Mammary epithelial cell (primary cell): ENCODE measurements at regions of chr20 and their contacts with region 1.

Region 1: GRCh38 chr20:1802385-1803060 is 92.7 kb upstream of the SIRPA start:
- DNase-seq: peak; percentile 52
- H3K4me3 ChIP-seq: peak overlapping the region; percentile 12 to 37 (median 26)
- H3K27ac ChIP-seq: no peak overlapping the region
- H3K4me1 ChIP-seq: peaks cover 38% of the 10 kb centered on the region
- H3K27me3 ChIP-seq: no peaks in the 10 kb centered on the region
- CTCF ChIP-seq: peak; percentile 50 to 75

Region 2: DNA sequence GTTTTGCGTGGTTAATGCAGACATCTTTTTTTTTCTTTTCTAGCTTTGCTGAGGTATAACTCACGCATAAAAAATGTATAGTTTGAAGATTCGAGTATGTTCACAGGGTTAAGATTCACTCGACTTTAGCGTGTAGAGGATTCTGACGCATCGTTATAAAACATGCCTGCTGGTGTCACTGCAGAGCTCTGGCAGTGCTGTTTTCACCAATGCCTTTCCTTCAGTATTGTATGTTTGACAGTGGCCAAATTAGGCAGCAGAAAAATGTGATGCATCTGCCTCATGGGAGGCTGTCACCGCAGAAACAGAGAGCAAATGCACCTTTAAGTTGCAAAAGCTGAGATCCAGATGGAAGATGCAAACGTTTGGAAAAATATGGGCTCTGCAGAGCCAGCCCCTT is 293.3 kb before region 1 on chr20:
- CTCF ChIA-PET with region 1: no interaction called
- dilution Hi-C with region 1: no loop called
- in situ Hi-C with region 1: no loop called
- intact Hi-C with region 1: loop called (anchors 1 kb)
- DNase-seq: peak; percentile 54
- H3K4me3 ChIP-seq: no peak overlapping the region
- H3K27ac ChIP-seq: no peak overlapping the region
- H3K4me1 ChIP-seq: peaks cover 38% of the 10 kb centered on the region
- H3K27me3 ChIP-seq: no peaks in the 10 kb centered on the region
- CTCF ChIP-seq: peak; percentile 51 to 69

Region 3: DNA sequence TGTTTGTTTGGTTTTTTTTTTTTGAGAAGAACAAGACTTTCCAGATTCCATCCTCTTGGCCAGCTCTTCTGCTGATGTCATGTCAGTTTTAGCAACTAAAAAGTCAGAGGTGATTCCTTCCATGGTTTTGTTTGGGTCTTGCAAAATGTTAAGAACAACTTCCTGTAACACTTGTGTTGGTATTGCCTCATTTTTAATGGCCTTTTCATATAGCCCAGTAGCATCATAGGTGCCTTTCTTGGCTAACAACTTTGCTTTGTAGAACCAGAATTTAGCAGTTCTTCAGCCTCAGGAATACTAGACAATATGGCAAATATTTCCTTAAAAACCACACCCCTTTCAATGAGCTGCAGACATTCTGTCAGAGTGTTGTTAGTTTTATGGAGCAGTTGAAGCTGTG is 45.5 kb before region 1 on chr20:
- CTCF ChIA-PET with region 1: no interaction called
- dilution Hi-C with region 1: no loop called
- in situ Hi-C with region 1: no loop called
- intact Hi-C with region 1: no loop called
- DNase-seq: no peak
- H3K4me3 ChIP-seq: no peak overlapping the region
- H3K27ac ChIP-seq: no peak overlapping the region
- H3K4me1 ChIP-seq: peaks cover 12% of the 10 kb centered on the region
- H3K27me3 ChIP-seq: no peaks in the 10 kb centered on the region
- CTCF ChIP-seq: no peak

Region 4: DNA sequence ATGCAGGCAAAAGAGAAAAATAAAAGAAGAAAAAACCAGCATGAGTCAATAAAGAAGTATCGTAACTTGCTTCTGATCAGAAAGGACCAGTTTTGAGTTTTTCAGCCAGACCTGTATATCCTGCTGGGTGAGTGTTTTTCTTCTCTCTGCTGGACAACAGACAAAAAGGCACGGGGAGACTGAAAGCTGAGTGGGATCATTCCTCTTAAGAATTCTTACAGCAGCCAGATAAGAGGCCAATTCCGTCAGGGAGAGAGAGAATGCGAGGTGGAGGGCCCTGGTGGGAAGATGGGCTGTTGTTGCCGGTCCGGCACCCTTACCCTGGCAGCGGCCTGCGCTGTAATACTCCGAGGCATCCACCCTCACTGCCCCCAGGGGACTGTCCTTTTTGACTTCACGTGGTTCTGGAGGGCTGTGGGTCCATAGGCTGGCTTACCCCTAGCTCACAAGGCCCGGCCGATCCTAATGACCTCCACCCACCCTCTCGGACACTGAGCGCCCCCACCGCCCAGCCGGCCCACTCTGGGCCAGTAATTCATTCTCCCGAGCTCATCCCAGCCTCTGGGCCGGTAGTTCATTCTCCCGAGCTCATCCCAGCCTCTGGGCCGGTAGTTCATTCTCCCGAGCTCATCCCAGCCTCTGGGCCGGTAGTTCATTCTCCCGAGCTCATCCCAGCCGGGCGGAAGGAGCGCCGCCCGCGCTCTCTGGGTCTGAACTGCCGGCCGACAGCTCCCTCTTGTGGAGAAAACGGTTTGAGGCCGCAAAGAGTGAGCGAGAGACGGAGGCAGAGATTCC is 25.6 kb before region 1 on chr20:
- CTCF ChIA-PET with region 1: interaction called, 4 read pairs
- dilution Hi-C with region 1: no loop called
- in situ Hi-C with region 1: no loop called
- intact Hi-C with region 1: loop called (anchors 2 kb)
- DNase-seq: peak; percentile 80
- H3K4me3 ChIP-seq: peak overlapping the region; percentile 48 to 63 (median 57)
- H3K27ac ChIP-seq: peak overlapping the region; percentile 37
- H3K4me1 ChIP-seq: peaks cover 14% of the 10 kb centered on the region
- H3K27me3 ChIP-seq: no peaks in the 10 kb centered on the region
- CTCF ChIP-seq: peak; percentile 62 to 87

Region 5: GRCh38 chr20:1860446-1860845 is 57.9 kb after region 1 on chr20:
- CTCF ChIA-PET with region 1: no interaction called
- dilution Hi-C with region 1: no loop called
- in situ Hi-C with region 1: no loop called
- intact Hi-C with region 1: no loop called
- DNase-seq: peak; percentile 82
- H3K4me3 ChIP-seq: no peak overlapping the region
- H3K27ac ChIP-seq: peak overlapping the region; percentile 37
- H3K4me1 ChIP-seq: peaks cover 25% of the 10 kb centered on the region
- H3K27me3 ChIP-seq: no peaks in the 10 kb centered on the region
- CTCF ChIP-seq: no peak

Region 6: DNA sequence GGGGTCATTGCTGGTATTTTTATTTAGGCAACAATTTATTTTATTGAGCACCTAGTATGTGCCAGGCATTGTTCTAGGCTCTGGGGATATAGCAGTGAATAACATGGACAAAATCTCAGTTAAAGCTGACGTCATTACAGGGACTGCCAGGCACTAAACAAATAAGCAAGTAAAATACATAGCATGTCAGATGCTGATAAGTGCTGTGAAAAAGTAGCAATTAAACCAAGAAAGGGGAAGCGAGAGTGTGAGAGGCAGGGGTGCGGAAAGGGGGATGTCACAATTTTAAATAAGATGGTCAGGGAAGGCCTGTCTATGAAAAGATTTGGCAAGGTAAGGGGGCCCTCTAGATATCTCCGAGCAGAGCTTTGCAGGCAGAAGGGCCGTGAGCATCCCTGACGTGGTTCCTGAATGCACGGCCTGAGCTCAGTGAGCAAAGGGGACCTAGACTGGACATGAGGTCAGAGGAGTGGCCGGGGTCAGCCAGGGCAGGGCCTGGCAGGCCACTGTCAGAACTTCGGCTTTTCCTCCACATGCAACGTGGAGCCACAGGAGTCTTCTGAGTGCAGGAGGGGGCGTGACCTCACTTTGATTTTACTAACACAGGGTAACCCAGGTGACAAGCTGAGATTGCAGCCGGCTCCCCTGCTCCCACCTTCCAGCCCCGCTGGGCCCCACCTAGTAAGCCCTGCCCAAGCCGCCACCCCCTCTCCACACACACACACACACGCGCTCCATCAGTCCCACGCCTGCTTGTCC is 68.4 kb after region 1 on chr20:
- CTCF ChIA-PET with region 1: no interaction called
- dilution Hi-C with region 1: no loop called
- in situ Hi-C with region 1: no loop called
- intact Hi-C with region 1: no loop called
- DNase-seq: no peak
- H3K4me3 ChIP-seq: no peak overlapping the region
- H3K27ac ChIP-seq: no peak overlapping the region
- H3K4me1 ChIP-seq: peaks cover under 1% of the 10 kb centered on the region
- H3K27me3 ChIP-seq: no peaks in the 10 kb centered on the region
- CTCF ChIP-seq: no peak

Region 7: DNA sequence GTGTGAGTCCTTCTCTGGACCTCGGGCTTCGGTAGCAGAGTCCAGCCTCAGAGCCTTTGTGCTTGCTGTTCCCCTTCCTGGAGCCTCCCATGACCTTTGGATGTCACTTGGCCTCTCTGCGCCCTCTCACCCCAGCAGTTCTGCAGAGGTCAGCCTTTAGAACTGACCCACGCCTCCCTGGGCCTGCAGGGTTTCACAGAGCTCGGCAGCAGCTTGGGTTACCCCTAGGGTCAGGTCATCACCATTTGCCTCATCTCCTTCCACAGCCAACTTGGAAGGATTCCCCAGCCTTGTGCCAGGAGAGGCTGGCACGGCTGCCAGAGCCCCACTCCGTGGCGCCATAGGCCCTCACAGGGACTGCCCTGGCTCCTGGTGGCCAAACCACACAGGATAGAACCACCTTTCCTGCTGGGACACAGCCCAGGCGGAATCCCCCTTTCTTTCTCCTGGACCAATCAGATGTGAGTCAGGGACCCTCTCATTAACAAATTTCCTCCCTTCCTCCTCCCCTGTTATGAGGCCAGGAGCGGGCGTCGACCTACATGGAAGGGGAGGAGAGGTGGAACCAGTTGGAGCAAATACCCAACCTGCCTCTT is 78.8 kb after region 1 on chr20:
- CTCF ChIA-PET with region 1: no interaction called
- dilution Hi-C with region 1: no loop called
- in situ Hi-C with region 1: no loop called
- intact Hi-C with region 1: loop called (anchors 5 kb)
- DNase-seq: no peak
- H3K4me3 ChIP-seq: no peak overlapping the region
- H3K27ac ChIP-seq: no peak overlapping the region
- H3K4me1 ChIP-seq: peaks cover under 1% of the 10 kb centered on the region
- H3K27me3 ChIP-seq: no peaks in the 10 kb centered on the region
- CTCF ChIP-seq: peak in 1 of 2 donors; percentile 19

Region 8: DNA sequence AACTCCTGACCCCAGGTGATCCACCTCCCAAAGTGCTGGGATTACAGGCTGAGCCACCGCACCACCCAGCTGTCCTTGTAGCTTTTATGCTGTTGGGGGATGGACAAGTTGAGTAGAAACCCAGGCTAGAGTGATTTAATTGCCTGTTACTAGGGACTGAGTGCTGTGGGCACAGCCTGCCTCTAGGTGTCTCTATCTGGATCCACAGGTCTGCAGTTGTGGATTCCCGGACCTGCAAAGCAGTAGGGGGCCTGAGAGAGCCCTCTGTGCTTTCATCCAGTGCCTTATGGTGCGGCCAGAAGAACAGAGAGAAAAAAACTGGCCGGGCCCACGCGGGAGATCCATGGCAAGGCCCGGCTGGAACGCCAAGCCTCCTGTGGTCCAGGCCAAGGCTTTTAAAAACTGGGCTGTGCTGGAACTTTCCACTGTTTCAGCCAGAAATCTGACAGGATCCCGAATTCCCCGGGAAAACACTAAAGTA is 97.8 kb after region 1 on chr20:
- CTCF ChIA-PET with region 1: no interaction called
- dilution Hi-C with region 1: loop called (anchors 5 kb)
- in situ Hi-C with region 1: no loop called
- intact Hi-C with region 1: loop called (anchors 1 kb)
- DNase-seq: peak; percentile 65
- H3K4me3 ChIP-seq: no peak overlapping the region
- H3K27ac ChIP-seq: no peak overlapping the region
- H3K4me1 ChIP-seq: peaks cover 19% of the 10 kb centered on the region
- H3K27me3 ChIP-seq: no peaks in the 10 kb centered on the region
- CTCF ChIP-seq: peak; percentile 74 to 78

Region 9: DNA sequence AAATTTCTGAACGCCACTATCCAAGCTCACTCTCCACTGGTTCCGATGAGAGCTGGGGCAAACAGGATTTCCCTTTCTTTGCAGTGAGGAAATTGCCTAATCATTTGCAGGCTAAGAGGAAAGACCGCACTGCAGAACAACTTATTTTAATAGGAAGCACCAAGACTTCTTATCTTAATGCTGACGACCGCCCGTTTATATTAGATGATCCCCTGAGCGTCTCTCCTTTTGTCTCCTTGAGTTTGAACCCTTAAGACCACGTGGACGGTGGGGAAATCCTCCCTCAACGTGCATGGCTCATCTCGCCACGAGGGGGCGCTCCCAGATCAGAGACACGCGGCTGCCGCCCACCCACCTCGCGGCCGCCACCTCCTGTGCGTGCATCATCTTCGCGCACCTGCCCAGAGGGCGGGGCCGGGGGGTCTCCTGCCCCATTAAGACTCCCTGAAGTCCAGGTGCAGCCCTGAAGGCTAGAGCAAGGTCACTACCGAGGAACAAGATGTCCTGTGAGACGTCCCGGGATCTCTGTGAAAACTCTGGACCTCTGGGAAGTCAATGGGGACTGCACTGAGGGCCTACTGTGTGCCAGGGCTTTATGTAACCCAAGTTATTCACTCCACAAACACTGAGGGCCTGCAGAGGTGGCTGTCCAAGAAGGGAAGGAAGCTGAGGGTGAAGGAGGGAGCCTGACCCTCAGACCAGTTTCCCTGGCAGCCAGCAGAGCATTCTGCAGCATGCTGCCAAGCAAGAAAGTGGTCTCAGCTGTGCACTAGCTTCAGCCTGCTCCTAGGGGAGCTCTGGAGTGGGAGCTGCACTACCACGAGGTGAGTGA is 163.2 kb after region 1 on chr20:
- CTCF ChIA-PET with region 1: no interaction called
- dilution Hi-C with region 1: no loop called
- in situ Hi-C with region 1: no loop called
- intact Hi-C with region 1: loop called (anchors 5 kb)
- DNase-seq: peak; percentile 37
- H3K4me3 ChIP-seq: no peak overlapping the region
- H3K27ac ChIP-seq: no peak overlapping the region
- H3K4me1 ChIP-seq: peaks cover 3% of the 10 kb centered on the region
- H3K27me3 ChIP-seq: no peaks in the 10 kb centered on the region
- CTCF ChIP-seq: peak; percentile 82 to 94